ENCODE measurements at regions of chr6 and their contacts with region 1.

Region 1: DNA sequence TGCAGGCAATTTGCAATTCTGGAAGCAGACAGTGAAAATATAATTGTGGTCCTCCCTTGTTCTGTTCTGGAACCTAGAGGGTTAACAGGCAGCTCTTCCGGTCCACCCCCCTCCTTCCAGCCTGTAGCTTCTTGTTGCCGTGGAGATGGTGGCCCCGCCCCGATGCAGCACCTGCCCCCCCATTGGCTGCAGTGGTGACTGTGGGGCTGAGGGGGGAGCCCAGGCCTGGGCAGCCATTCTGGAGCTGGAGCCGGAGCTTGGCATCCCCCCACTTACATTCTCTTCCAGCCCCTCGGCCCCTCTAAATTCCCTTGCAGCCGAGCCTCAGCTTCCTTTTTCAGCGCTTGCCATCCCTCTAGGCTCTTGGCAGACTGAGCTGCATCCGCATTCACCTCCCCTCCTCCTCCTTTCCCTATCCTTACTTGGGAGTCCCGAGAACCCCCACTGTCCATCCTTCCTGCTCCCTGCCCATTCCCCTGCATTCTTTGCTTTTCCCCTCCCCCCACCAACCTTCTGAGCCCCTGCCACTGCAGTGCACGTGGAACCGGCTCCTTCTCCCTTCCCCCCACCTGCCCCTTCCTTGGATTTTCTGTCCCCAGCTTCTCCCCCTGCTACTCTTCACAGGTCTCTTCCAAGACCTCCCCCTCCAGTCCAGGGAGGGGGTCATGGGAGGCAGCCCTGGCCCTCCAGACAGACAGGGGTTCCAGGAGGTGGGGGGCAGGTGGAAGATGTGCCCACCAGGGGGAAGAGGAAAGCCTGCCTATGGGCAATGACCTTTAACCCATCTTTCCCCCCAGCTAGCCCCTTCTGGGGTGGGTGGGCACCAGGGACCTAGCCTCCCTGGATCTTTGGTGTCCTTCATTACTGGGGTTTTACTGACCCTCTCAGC is 11.4 kb downstream of the SYNGAP1 start:
- H3K4me3 ChIP-seq: no peak overlapping the region
- H3K27ac ChIP-seq: no peak overlapping the region
- H3K4me1 ChIP-seq: peaks cover 10% of the 10 kb centered on the region
- CTCF ChIP-seq: no peak

Region 2: DNA sequence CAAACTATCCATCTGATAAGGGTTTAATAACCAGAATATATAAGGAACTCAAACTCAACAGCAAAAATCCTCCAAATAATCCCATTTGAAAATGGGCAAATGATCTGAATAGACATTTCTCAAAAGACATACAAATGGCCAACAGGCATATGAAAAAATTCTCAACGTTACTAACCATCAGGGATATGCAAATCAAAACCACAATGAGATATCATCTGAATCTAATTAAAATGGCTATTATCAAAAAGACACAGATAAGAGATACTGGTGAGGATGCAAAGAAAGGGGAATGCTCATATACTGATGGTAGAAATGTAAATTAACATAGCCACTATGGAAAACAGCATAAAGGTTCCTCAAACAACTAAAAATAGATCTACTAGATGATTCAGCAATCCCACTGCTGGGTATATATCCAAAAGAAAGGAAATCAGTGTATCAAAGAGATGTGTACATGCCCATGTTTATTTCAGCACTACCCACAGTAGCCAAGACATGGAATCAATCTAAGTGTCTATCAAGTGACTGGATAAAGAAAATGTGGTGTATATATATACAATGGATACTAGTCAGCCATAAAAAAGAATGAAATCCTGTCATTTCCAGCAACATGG is 468.9 kb before region 1 on chr6:
- CTCF ChIA-PET with region 1: no interaction called
- POLR2A ChIA-PET with region 1: no interaction called
- H3K4me3 ChIP-seq: no peak overlapping the region
- H3K27ac ChIP-seq: no peak overlapping the region
- H3K4me1 ChIP-seq: peaks cover 10% of the 10 kb centered on the region
- CTCF ChIP-seq: no peak

Region 3: DNA sequence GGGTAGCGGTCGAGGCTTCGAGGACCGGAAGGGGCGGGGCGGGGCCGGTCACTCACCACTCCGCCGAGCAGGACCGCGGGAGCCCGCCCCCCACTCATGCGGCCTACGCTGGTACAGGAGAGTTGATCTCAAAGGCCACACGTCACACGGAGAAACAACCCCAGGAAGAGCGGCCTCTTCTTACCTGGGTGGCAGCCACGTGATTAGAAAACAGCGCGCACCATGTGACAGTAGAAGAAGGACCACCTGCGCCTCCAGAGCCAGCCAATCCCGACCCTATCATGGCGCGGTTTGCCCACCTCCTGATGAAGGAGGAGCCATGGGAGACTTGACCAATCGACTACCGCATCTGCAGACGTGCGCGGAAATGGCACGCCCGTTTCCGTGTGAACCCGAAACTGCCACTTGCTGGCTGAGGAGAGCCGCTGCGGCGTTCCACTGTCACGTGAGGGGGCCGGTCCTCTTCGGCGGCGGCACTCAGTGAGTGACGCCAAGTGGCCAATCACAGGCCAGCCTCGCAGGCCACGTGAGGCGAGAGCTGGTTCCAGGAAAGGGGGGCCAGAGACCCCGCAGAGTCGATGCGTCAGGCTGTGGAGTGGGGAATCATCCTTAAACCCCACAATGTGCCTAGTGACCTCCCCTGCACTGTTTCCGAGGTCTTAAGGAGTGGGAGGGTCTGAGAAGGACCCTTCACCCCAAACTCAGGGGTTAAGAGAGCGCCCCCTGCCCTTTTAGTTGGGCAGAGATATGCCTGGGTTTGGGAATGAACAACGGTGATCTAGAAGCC is 13.1 kb before region 1 on chr6 and contains the start of gene CUTA:
- CTCF ChIA-PET with region 1: interaction called, 13 read pairs
- POLR2A ChIA-PET with region 1: interaction called, 12 read pairs
- H3K4me3 ChIP-seq: peak within 1 kb of the TSS; percentile 46
- H3K27ac ChIP-seq: peak within 1 kb of the TSS; percentile 67
- H3K4me1 ChIP-seq: no peaks in the 10 kb centered on the region
- CTCF ChIP-seq: peak; percentile 90

Region 4: GRCh38 chr6:33477864-33478263 is 46.6 kb after region 1 on chr6:
- CTCF ChIA-PET with region 1: no interaction called
- POLR2A ChIA-PET with region 1: no interaction called
- H3K4me3 ChIP-seq: no peak overlapping the region
- H3K27ac ChIP-seq: no peak overlapping the region
- H3K4me1 ChIP-seq: no peaks in the 10 kb centered on the region
- CTCF ChIP-seq: no peak

Measured in HEK293 (cell line).